BJ (cell line): ENCODE measurements at regions of chr17 and their contacts with region 1.

Region 1: GRCh38 chr17:76957678-76958464 is 89.7 kb downstream of the MGAT5B start:
- DNase-seq: no peak
- H3K4me3 ChIP-seq: no peak overlapping the region
- H3K27me3 ChIP-seq: peaks cover 13% of the 10 kb centered on the region
- CTCF ChIP-seq: no peak

Region 2: GRCh38 chr17:76981545-76982295 is 23.8 kb after region 1 on chr17:
- CTCF ChIA-PET with region 1: no interaction called
- POLR2A ChIA-PET with region 1: interaction called, 22 read pairs
- DNase-seq: no peak
- H3K4me3 ChIP-seq: no peak overlapping the region
- H3K27me3 ChIP-seq: peaks cover 6% of the 10 kb centered on the region; the same call in 1 of the 2 replicates
- CTCF ChIP-seq: no peak